Gastrocnemius medialis (tissue), 4 donors: ENCODE measurements at regions of chr19 and their contacts with region 1.

Region 1: GRCh38 chr19:5031231-5032100 is 62.6 kb downstream of the KDM4B start:
- DNase-seq: peak; percentile 61 to 80
- ATAC-seq: peak; percentile 76 to 77
- H3K4me3 ChIP-seq: no peak overlapping the region
- H3K27ac ChIP-seq: peak overlapping the region; percentile 72 to 80 (median 78)
- H3K4me1 ChIP-seq: peaks cover 20 to 59% of the 10 kb centered on the region in 2 donors
- H3K27me3 ChIP-seq: no peaks in the 10 kb centered on the region
- CTCF ChIP-seq: peak; percentile 91 to 98 (median 96)
- POLR2A ChIP-seq: no peak

Region 2: GRCh38 chr19:4523306-4524110 is 508.0 kb before region 1 on chr19:
- in situ Hi-C with region 1: no loop called
- intact Hi-C with region 1: no loop called
- DNase-seq: peak; percentile 35 to 70
- ATAC-seq: peak in 1 of 2 donors; percentile 14
- H3K4me3 ChIP-seq: no peak overlapping the region
- H3K27ac ChIP-seq: peak overlapping the region; percentile 43 to 97 (median 68)
- H3K4me1 ChIP-seq: peaks cover 11 to 13% of the 10 kb centered on the region in 2 donors
- H3K27me3 ChIP-seq: no peaks in the 10 kb centered on the region
- CTCF ChIP-seq: peak; percentile 26 to 87 (median 73)
- POLR2A ChIP-seq: no peak

Region 3: GRCh38 chr19:4867534-4868285 is 163.8 kb before region 1 on chr19 and contains the start of gene PLIN3:
- in situ Hi-C with region 1: loop called in 3 of 4 experiments (anchors 5 to 10 kb)
- intact Hi-C with region 1: loop called (anchors 1 kb)
- DNase-seq: peak; percentile 95 to 96
- ATAC-seq: peak; percentile 87 to 88
- H3K4me3 ChIP-seq: peak within 1 kb of the TSS; percentile 68 to 87 (median 82)
- H3K27ac ChIP-seq: peak within 1 kb of the TSS; percentile 87 to 93 (median 91)
- H3K4me1 ChIP-seq: peaks cover 5 to 14% of the 10 kb centered on the region in 2 donors
- H3K27me3 ChIP-seq: no peaks in the 10 kb centered on the region
- CTCF ChIP-seq: no peak
- POLR2A ChIP-seq: peak; percentile 73 to 76
- total RNA-seq, gene PLIN3: 53.9 to 193 (median 92.5) TPM

Region 4: GRCh38 chr19:4933528-4933927 is 97.9 kb before region 1 on chr19:
- in situ Hi-C with region 1: no loop called
- intact Hi-C with region 1: no loop called
- DNase-seq: peak; percentile 80 to 88
- ATAC-seq: peak; percentile 96 to 97
- H3K4me3 ChIP-seq: no peak overlapping the region
- H3K27ac ChIP-seq: peak overlapping the region in 2 of 4 donors; percentile 65 to 74
- H3K4me1 ChIP-seq: peaks cover 2 to 9% of the 10 kb centered on the region in 2 donors
- H3K27me3 ChIP-seq: no peaks in the 10 kb centered on the region
- CTCF ChIP-seq: no peak
- POLR2A ChIP-seq: no peak

Region 5: DNA sequence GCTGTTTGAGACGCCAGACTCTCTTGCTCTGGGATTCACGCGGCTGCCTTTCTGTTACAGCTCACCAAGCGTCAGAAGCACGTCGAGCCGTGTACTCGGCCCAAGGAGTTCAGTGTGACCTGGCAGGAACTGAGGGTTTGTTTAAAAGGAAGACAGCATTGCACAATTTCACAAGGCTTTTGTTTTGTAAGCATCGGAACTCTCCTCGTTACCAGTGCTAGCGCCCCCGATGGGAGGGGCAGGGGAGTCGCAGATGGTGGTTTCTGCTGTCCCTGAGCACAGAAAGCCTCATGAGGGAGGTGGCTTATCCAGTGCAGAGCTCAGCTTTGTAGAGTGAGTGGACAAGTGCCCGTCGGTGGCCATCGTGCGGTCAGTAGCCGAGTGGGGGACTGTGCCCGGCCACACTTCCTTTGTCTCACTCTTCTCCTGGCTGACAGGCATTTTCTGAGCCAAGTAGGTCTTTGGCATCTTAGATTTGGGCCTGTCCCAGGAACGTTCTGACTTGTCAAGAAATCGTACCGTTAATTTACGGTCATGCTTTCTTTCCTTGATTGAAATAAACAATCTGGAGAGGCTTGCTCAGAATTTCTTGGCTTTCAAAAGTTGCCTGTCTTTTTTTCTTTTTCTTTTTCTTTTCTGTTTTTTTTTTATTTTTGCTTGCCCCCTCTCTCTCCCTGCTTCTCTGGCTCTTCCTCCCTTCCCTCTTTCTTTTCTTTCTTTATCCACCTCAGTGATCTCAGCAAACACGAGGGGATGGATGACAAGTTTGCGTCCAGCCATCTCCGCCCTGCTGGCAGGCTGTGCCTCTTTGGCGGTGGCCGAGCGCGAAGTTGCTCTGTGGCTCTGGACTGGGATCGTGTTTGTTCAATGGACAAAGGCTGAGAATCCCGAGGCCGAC is 54.8 kb before region 1 on chr19:
- in situ Hi-C with region 1: loop called in 1 of 4 experiments (anchors 10 kb)
- intact Hi-C with region 1: loop called (anchors 2 kb)
- DNase-seq: peak; percentile 92 to 94
- ATAC-seq: peak; percentile 82 to 86
- H3K4me3 ChIP-seq: peak overlapping the region; percentile 26 to 40 (median 38)
- H3K27ac ChIP-seq: peak overlapping the region; percentile 85 to 96 (median 93)
- H3K4me1 ChIP-seq: peaks cover 80 to 82% of the 10 kb centered on the region in 2 donors
- H3K27me3 ChIP-seq: no peaks in the 10 kb centered on the region
- CTCF ChIP-seq: peak in 4 of 5 experiments; percentile 28 to 54 (median 38)
- POLR2A ChIP-seq: peak; percentile 64 to 79

Region 6: DNA sequence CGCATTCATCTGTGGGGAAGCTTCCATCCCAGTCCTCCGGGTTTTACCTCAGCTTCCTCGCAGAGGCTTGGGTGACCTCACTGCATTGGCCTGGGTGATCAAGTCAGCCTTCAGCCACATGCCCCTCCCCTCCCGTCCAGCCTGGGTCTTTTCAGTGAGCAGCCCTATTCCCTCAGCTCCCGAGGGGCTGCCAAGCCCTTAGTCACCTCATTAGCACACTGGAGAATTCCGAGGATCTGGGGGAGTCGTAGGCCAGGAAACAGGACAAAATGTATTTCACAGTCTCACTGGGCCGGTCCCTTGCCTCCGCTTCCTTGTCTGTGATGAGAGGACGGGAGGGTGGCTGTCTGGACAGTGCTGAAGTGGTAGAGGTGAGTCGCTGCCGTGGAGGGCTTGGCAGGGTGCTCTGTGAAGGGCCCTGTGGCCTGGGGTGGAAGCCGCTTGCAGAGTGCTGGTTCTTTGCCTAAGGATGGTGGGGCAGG is 42.7 kb before region 1 on chr19:
- in situ Hi-C with region 1: loop called in 1 of 4 experiments (anchors 10 kb)
- intact Hi-C with region 1: no loop called
- DNase-seq: no peak
- ATAC-seq: peak; percentile 24 to 52
- H3K4me3 ChIP-seq: no peak overlapping the region
- H3K27ac ChIP-seq: peak overlapping the region; percentile 2 to 58 (median 22)
- H3K4me1 ChIP-seq: peaks cover 48 to 57% of the 10 kb centered on the region in 2 donors
- H3K27me3 ChIP-seq: no peaks in the 10 kb centered on the region
- CTCF ChIP-seq: no peak
- POLR2A ChIP-seq: no peak

Region 7: GRCh38 chr19:5001615-5002014 is 29.9 kb before region 1 on chr19:
- in situ Hi-C with region 1: no loop called
- intact Hi-C with region 1: loop called (anchors 1 kb)
- DNase-seq: no peak
- ATAC-seq: peak in 1 of 2 donors; percentile 56
- H3K4me3 ChIP-seq: no peak overlapping the region
- H3K27ac ChIP-seq: no peak overlapping the region
- H3K4me1 ChIP-seq: peaks cover 3 to 12% of the 10 kb centered on the region in 2 donors
- H3K27me3 ChIP-seq: no peaks in the 10 kb centered on the region
- CTCF ChIP-seq: peak; percentile 52 to 75 (median 67)
- POLR2A ChIP-seq: no peak

Region 8: DNA sequence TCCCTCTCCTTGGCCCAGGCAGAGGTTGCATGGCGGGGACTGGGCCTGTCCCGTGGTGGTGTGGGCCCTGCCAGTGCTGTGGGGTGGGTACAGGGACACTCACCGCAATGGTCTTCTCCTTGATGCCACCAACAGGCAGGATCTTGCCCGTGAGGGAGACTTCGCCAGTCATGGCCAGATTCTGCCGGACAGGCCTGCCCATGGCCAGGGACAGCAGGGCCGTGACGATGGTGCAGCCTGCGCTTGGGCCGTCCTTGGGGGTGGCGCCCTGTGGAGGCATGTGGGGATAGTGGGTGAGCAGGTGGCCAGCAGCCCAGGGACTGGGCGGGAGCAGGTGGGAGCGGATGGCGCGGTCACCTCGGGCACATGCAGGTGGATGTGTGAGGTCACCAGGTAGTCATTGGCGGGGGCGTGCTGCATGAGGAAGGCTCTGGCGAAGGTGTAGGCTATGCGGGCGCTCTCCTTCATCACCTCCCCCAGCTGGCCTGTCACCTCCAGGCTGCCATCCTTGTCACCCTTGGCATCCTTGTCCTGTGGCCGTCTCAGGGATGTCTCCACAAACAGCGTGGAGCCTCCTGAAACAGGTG is 661.8 kb after region 1 on chr19:
- in situ Hi-C with region 1: no loop called
- intact Hi-C with region 1: no loop called
- DNase-seq: no peak
- ATAC-seq: no peak
- H3K4me3 ChIP-seq: no peak overlapping the region
- H3K27ac ChIP-seq: peak overlapping the region in 2 of 4 donors; percentile 9 to 94
- H3K4me1 ChIP-seq: peaks cover 18 to 21% of the 10 kb centered on the region in 2 donors
- H3K27me3 ChIP-seq: no peaks in the 10 kb centered on the region
- CTCF ChIP-seq: no peak
- POLR2A ChIP-seq: no peak